H1 (cell line): ENCODE measurements at regions of chr15 and their contacts with region 1.

Region 1: GRCh38 chr15:101652098-101652782 is at the start of gene TM2D3:
- DNase-seq: peak; percentile 65 to 94
- H3K4me3 ChIP-seq: peak within 1 kb of the TSS; percentile 87 to 98 (median 95)
- H3K27ac ChIP-seq: peak within 1 kb of the TSS; percentile 46; the same call in 1 of the 2 replicates
- H3K4me1 ChIP-seq: peaks cover 0 to 3% (median 0%) of the 10 kb centered on the region in 4 experiments; a peak in 2 of 7 replicates
- H3K27me3 ChIP-seq: no peaks in the 10 kb centered on the region; a peak in 1 of 7 replicates
- CTCF ChIP-seq: peak; percentile 77 to 79 (median 78)
- EP300 ChIP-seq: no peak
- POLR2A ChIP-seq: peak in 1 of 2 experiments; percentile 75; a peak in 2 of 3 replicates
- RAD21 ChIP-seq: peak; percentile 53 to 66
- total RNA-seq, gene TM2D3: 24.2 and 28.0 TPM in 2 replicates

Region 2: DNA sequence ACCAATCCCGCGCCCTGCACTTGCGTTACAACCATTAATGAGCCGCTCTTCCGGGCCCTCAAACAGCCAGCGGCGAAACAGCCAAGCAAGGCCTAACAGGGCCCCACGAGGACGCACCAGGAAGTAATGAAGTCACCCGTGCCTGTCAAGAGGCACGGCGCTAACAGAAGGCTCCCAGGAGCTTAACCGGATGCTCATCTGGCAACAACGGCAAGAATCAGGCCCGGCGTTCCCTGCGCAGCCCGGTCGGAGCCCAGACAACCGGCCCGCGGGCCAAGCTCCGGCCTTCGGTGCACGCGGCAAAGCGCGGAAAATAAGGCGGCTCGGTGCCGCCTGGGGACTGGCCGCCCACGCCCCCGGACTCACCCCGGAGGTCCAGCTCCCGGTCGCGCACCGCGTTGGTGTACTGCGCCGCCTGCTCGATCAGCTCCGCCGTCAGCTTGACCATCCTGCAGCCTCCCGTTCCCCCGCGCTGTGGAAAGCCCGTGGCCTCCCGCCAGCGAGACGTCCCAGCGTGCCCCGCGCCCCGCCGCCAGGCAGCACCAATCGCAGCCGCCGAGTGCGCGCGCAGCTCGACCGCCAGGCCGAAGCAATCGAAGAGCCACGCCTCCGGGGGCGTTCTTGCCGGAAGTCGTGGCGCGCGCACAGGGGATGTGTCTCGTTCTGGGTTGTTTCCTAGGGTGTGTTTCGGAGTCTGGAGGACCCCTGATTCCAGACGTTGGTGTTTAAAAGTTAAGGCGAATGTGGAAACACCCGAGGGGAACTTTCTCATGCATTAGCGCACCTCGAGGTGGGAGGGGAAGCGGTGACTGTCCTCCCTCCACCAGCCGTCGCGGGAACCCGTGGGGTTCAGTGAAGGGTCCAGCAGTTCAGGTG is 357.3 kb before region 1 on chr15 and contains the start of gene SNRPA1:
- CTCF ChIA-PET with region 1: interaction called, 21 read pairs
- POLR2A ChIA-PET with region 1: interaction called, 3 read pairs
- DNase-seq: peak; percentile 66 to 96
- H3K4me3 ChIP-seq: peak within 1 kb of the TSS; percentile 93 to 98 (median 94)
- H3K27ac ChIP-seq: peak within 1 kb of the TSS; percentile 46
- H3K4me1 ChIP-seq: peaks cover 3 to 5% (median 4%) of the 10 kb centered on the region in 4 experiments; a peak in 4 of 7 replicates
- H3K27me3 ChIP-seq: no peaks in the 10 kb centered on the region
- CTCF ChIP-seq: no peak
- EP300 ChIP-seq: no peak
- POLR2A ChIP-seq: peak in 1 of 2 experiments; percentile 82; a peak in 2 of 3 replicates
- RAD21 ChIP-seq: no peak
- total RNA-seq, gene SNRPA1: 214 and 221 TPM in 2 replicates

Region 3: GRCh38 chr15:101625980-101626379 is 26.3 kb before region 1 on chr15:
- CTCF ChIA-PET with region 1: no interaction called
- POLR2A ChIA-PET with region 1: no interaction called
- DNase-seq: no peak
- H3K4me3 ChIP-seq: no peak overlapping the region
- H3K27ac ChIP-seq: no peak overlapping the region
- H3K4me1 ChIP-seq: no peaks in the 10 kb centered on the region
- H3K27me3 ChIP-seq: no peaks in the 10 kb centered on the region
- CTCF ChIP-seq: no peak
- EP300 ChIP-seq: no peak
- POLR2A ChIP-seq: no peak
- RAD21 ChIP-seq: no peak

Region 4: GRCh38 chr15:101710806-101711205 is 58.6 kb after region 1 on chr15:
- CTCF ChIA-PET with region 1: no interaction called
- POLR2A ChIA-PET with region 1: no interaction called
- DNase-seq: no peak
- H3K4me3 ChIP-seq: no peak overlapping the region
- H3K27ac ChIP-seq: no peak overlapping the region
- H3K4me1 ChIP-seq: no peaks in the 10 kb centered on the region
- H3K27me3 ChIP-seq: no peaks in the 10 kb centered on the region
- CTCF ChIP-seq: no peak
- EP300 ChIP-seq: no peak
- POLR2A ChIP-seq: no peak
- RAD21 ChIP-seq: no peak